A549 (cell line): ENCODE measurements at regions of chr4 and their contacts with region 1.

Region 1: GRCh38 chr4:6974138-6974848 is 64.7 kb downstream of the TBC1D14 start:
- DNase-seq: peak; percentile 72 to 82
- ATAC-seq: peak; percentile 80 to 93
- H3K4me3 ChIP-seq: no peak overlapping the region
- H3K27ac ChIP-seq: no peak overlapping the region
- H3K4me1 ChIP-seq: peaks cover 6% of the 10 kb centered on the region; the same call in 2 of the 3 replicates
- CTCF ChIP-seq: peak; percentile 57
- EP300 ChIP-seq: no peak
- POLR2A ChIP-seq: no peak
- RAD21 ChIP-seq: peak; percentile 50 to 63; a peak in 3 of 5 replicates

Region 2: DNA sequence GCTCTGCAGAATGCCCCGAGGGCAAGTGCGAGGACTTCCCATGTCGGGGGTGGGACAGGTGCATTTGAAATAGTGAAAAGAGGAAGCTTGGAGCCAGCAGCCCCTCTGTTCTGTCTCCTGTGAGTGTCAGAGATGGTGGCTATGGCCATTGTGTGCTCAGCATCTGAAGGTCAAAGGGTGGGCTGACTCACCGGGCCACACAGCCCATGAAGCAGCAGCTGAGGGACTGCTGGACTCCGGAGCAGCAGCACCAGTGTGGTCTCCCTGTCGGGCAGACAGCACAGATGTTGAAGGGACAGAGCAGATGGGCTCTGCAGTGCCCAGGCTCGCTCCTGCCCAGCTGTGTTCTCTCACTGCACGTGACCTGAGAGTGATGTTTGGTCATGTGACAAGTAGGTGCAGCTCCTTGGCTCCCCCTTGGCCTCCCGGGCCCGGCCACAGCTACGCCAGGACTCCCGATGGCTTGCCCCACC is 11.1 kb before region 1 on chr4:
- CTCF ChIA-PET with region 1: interaction called, 15 read pairs
- POLR2A ChIA-PET with region 1: no interaction called
- DNase-seq: no peak
- ATAC-seq: peak; percentile 28 to 34; a peak in 1 of 6 replicates
- H3K4me3 ChIP-seq: no peak overlapping the region
- H3K27ac ChIP-seq: no peak overlapping the region
- H3K4me1 ChIP-seq: peaks cover 8% of the 10 kb centered on the region; the same call in 2 of the 3 replicates
- CTCF ChIP-seq: no peak
- EP300 ChIP-seq: no peak
- POLR2A ChIP-seq: no peak
- RAD21 ChIP-seq: no peak

Region 3: DNA sequence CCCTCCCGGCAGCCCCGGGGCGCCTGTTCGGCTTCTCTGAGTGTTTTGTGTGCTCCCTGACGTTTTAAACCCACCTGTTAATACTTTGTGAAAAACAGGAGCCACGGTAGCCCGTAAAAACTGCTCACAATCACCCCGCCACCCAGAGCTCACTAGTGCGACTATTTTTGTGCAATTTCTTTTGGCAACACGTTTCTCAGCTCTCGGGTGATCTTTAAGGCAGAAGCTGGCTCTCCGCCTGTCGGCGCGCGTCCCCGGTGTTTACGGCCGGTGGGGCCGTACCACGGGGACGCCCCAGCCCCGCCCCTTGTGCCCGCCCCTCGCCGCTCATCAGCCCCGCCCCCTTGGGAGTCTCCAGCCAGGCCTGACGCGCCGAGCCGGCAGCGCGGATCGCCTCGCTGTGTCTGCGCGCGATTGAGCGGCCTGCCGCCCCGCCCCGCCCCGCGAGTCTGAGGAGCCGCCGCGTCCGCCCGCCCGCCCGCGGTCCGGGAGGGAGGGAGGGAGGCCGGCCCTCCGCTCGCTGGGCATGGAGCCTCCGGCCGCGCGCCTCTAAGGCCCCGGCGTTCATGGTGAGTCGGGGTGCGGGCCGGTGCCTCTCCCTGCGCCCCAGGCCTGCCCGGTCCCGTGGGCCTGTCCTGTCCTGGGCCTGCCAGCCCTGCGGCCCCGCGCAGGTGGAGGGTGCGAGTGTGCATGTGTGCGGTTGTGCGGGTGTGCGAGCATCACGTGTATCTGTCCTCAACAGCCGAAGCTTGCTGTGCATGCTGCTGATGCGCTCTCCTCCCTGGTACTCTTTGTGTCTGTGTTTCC is 12.7 kb after region 1 on chr4:
- CTCF ChIA-PET with region 1: interaction called, 20 read pairs
- POLR2A ChIA-PET with region 1: interaction called, 4 read pairs
- DNase-seq: peak; percentile 70 to 88
- ATAC-seq: peak; percentile 89 to 91
- H3K4me3 ChIP-seq: peak overlapping the region; percentile 68
- H3K27ac ChIP-seq: peak overlapping the region; percentile 83 to 94
- H3K4me1 ChIP-seq: peaks cover 38% of the 10 kb centered on the region
- CTCF ChIP-seq: no peak
- EP300 ChIP-seq: no peak
- POLR2A ChIP-seq: 0 out of 2 replicates have a peak, but pooled peaks have one; percentile 5
- RAD21 ChIP-seq: peak in 1 of 2 experiments; percentile 23; a peak in 2 of 5 replicates

Region 4: GRCh38 chr4:8156617-8157016 is 1182.3 kb after region 1 on chr4:
- CTCF ChIA-PET with region 1: no interaction called
- POLR2A ChIA-PET with region 1: no interaction called
- DNase-seq: no peak
- ATAC-seq: no peak
- H3K4me3 ChIP-seq: no peak overlapping the region
- H3K27ac ChIP-seq: no peak overlapping the region
- H3K4me1 ChIP-seq: peaks cover 3% of the 10 kb centered on the region; the same call in 1 of the 3 replicates
- CTCF ChIP-seq: no peak
- EP300 ChIP-seq: no peak
- POLR2A ChIP-seq: no peak
- RAD21 ChIP-seq: no peak